Activated CD4-positive, alpha-beta memory T cell treated with anti-CD3 and anti-CD28 coated beads, Interleukin-2, amount 10 ng/mL, durations not matched to agents 7 days and 5 days (primary cell): ENCODE measurements at regions of chr19 and their contacts with region 1.

Region 1: GRCh38 chr19:6811906-6812305 is 39.4 kb downstream of the VAV1 start:
- DNase-seq: no peak
- H3K4me3 Mint-ChIP-seq: no peak overlapping the region
- H3K27ac Mint-ChIP-seq: no peak overlapping the region
- H3K4me1 Mint-ChIP-seq: peaks cover 63% of the 10 kb centered on the region
- H3K27me3 Mint-ChIP-seq: no peaks in the 10 kb centered on the region

Region 2: GRCh38 chr19:6730153-6730825 is 81.6 kb before region 1 on chr19:
- CTCF ChIA-PET with region 1: no interaction called
- POLR2A ChIA-PET with region 1: no interaction called
- DNase-seq: peak; percentile 43
- H3K4me3 Mint-ChIP-seq: no peak overlapping the region
- H3K27ac Mint-ChIP-seq: no peak overlapping the region
- H3K4me1 Mint-ChIP-seq: peaks cover 7% of the 10 kb centered on the region
- H3K27me3 Mint-ChIP-seq: no peaks in the 10 kb centered on the region

Region 3: DNA sequence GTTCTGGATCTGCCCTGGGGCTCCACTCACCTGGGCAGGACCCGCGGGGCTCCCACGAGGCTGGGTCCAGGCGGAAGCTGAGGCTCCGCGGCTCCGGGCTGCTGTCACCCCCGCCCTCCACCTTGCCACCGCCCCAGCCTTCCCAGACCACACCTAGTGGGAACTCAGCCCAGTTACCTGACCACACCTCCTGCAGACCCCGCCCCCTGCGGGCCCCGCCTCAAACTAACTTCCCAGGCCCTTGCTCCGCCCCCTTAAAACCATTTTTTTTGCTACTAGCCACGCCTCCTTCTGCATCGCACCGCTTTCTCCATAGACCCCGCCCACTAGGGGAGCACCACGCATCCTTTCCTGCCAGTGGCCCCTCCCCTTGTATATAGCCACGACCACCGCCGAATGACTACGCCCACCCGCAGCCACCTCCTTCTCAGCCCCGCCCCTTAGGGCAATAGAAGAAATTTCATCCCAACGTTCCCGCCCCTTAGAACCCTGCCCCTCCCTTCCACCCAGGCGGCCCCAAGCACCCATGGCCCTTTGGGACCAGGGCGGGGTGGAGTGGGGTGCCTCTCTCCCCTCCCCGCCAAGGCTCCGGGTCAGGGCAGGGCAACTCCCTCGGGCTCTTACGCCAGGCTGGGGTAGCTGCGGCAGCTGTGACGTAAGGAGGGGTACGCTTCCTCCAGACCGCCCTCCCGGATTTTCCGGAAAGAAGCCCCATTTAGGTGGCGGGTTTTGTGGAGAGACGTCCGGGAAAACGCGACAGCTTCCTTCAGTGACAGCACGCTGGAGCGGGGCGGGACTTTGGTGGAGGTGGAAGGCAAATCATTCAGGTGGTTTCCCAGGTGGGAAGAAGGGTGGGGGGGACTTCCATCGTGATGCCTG is 44.3 kb before region 1 on chr19 and contains the start of gene SH2D3A:
- CTCF ChIA-PET with region 1: interaction called, 5 read pairs
- POLR2A ChIA-PET with region 1: interaction called, 20 read pairs
- DNase-seq: peak; percentile 96
- H3K4me3 Mint-ChIP-seq: peak within 1 kb of the TSS; percentile 88
- H3K27ac Mint-ChIP-seq: peak within 1 kb of the TSS; percentile 89
- H3K4me1 Mint-ChIP-seq: peaks cover 53% of the 10 kb centered on the region
- H3K27me3 Mint-ChIP-seq: no peaks in the 10 kb centered on the region
- total RNA-seq, gene SH2D3A: 26.4 to 28.1 TPM